ENCODE measurements at regions of chr12 and their contacts with region 1.

Region 1: DNA sequence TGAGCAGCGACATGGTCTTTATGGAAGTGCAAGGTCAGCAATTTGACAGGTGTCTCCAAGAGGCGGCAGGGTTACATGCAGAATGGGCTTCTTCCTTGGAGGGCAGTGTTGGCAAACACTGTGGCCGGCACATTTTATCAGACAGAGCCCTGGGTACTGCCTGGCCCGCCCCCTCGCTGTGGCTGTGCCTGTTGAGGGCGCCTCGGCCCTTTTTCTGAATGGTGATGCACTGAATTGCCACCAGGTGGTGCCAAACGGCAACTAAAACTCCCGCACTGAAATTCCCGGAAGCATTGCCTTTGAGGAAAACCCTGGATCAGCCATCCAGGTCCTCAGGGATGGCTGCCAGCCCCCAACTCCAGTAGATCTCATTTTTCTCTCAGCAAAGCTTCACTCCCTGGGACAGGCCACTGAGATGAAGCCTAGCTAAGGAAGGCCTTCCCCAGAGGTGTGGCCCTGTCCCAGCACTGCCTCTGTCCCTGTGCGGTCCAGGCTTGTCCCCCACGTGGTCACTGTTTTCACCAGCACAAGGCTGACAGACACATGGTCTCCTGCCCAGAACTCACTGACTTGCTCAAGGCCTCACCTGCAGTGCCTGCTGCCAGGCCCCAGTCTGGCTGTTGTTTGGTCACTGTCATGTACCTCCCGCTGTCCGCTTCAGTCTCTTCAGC is 73.6 kb downstream of the TESC start:
- DNase-seq: peak; percentile 56 to 63
- ATAC-seq: peak; percentile 71 to 92 (median 84)
- H3K4me3 ChIP-seq: no peak overlapping the region
- H3K27ac ChIP-seq: peak overlapping the region in 7 of 10 donors; percentile 7 to 52 (median 28)
- H3K4me1 ChIP-seq: peaks cover 5 to 39% (median 15%) of the 10 kb centered on the region in 9 donors
- H3K27me3 ChIP-seq: no peaks in the 10 kb centered on the region
- CTCF ChIP-seq: peak; percentile 84 to 97 (median 95)

Region 2: DNA sequence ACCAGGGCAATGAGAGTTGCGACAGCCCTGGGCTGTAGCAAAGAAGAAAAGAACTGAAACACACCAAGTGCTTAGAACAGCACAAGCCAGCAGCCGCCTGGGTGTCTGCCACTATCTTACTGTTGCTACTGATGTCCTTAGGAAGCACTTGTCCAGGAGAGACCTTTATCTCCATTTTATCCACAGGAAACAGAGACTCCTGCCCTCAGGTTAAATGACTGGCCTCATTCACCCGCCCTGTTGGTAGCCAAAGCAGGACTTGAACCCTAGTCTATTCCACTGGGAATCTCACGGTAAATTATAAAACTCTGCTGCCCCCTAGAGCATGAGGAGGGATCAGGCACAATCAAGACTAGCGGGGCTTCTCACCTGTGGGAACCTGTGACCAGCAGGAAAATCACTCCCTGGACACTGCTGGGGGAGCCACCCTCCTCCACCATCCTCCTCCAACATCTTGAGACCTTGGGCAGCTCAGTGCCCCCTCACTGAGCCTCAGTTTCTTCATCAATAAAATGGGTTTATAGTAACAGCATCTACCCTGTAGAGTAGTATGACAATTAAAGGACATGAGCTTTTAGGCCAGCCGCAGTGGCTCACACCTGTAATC is 94.1 kb after region 1 on chr12:
- intact Hi-C with region 1: loop called (anchors 1 to 10 kb)
- DNase-seq: no peak
- ATAC-seq: peak in 7 of 8 donors; percentile 27 to 54 (median 42)
- H3K4me3 ChIP-seq: no peak overlapping the region
- H3K27ac ChIP-seq: peak overlapping the region in 7 of 10 donors; percentile 21 to 66 (median 55)
- H3K4me1 ChIP-seq: peaks cover 10 to 57% (median 30%) of the 10 kb centered on the region in 9 donors
- H3K27me3 ChIP-seq: no peaks in the 10 kb centered on the region
- CTCF ChIP-seq: peak; percentile 60 to 73 (median 71)

Region 3: GRCh38 chr12:117155278-117156060 is 129.9 kb after region 1 on chr12:
- intact Hi-C with region 1: loop called in 9 of 10 experiments (anchors 1 to 10 kb)
- DNase-seq: peak; percentile 41 to 46
- ATAC-seq: peak in 7 of 8 donors; percentile 25 to 75 (median 52)
- H3K4me3 ChIP-seq: no peak overlapping the region
- H3K27ac ChIP-seq: no peak overlapping the region
- H3K4me1 ChIP-seq: peaks cover 0 to 28% (median 0%) of the 10 kb centered on the region in 9 donors
- H3K27me3 ChIP-seq: no peaks in the 10 kb centered on the region
- CTCF ChIP-seq: peak; percentile 40 to 79 (median 72)

Measured in heart right ventricle (tissue), 16 donors.